ENCODE measurements at regions of chr3 and their contacts with region 1.

Region 1: GRCh38 chr3:120417272-120417911 is 33.4 kb downstream of the FSTL1 start:
- DNase-seq: peak; percentile 94
- ATAC-seq: peak; percentile 90
- H3K4me3 Mint-ChIP-seq: peak overlapping the region; percentile 46
- H3K27ac Mint-ChIP-seq: peak overlapping the region; percentile 87
- H3K4me1 Mint-ChIP-seq: peaks cover 46% of the 10 kb centered on the region
- H3K27me3 Mint-ChIP-seq: no peaks in the 10 kb centered on the region
- CTCF ChIP-seq: peak; percentile 77

Region 2: DNA sequence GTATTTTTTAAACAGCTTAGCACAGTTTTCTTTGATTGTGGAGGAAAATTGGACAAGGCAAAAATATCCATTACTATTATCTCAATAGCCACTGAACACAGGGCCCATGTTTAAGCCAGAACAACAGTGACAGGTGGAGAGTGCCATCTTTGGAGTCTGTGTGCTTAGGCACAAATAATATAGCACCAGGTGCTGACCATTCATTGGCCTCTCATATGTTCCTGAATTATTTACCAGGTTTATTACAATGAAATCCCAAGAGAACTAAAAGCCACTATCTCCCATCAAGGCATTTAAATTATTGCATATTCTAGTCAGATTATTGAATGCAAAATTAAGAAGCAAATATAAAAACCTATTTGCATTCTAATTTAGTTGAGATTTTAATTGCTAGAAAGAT is 172.0 kb before region 1 on chr3:
- CTCF ChIA-PET with region 1: interaction called, 52 read pairs
- POLR2A ChIA-PET with region 1: no interaction called
- DNase-seq: no peak
- ATAC-seq: no peak
- H3K4me3 Mint-ChIP-seq: no peak overlapping the region
- H3K27ac Mint-ChIP-seq: no peak overlapping the region
- H3K4me1 Mint-ChIP-seq: no peaks in the 10 kb centered on the region
- H3K27me3 Mint-ChIP-seq: peaks cover 4% of the 10 kb centered on the region; the same call in 1 of the 2 replicates
- CTCF ChIP-seq: no peak

Region 3: GRCh38 chr3:120432150-120432860 is 14.9 kb after region 1 on chr3:
- CTCF ChIA-PET with region 1: interaction called, 40 read pairs
- POLR2A ChIA-PET with region 1: interaction called, 9 read pairs
- DNase-seq: peak; percentile 64
- ATAC-seq: peak; percentile 81
- H3K4me3 Mint-ChIP-seq: no peak overlapping the region
- H3K27ac Mint-ChIP-seq: peak overlapping the region; percentile 95
- H3K4me1 Mint-ChIP-seq: peaks cover 74% of the 10 kb centered on the region
- H3K27me3 Mint-ChIP-seq: no peaks in the 10 kb centered on the region
- CTCF ChIP-seq: no peak

Region 4: GRCh38 chr3:120450600-120451271 is 33.3 kb after region 1 on chr3 and contains the start of gene FSTL1:
- CTCF ChIA-PET with region 1: interaction called, 39 read pairs
- POLR2A ChIA-PET with region 1: interaction called, 13 read pairs
- DNase-seq: peak; percentile 79
- ATAC-seq: peak; percentile 70
- H3K4me3 Mint-ChIP-seq: peak within 1 kb of the TSS; percentile 90
- H3K27ac Mint-ChIP-seq: peak within 1 kb of the TSS; percentile 73
- H3K4me1 Mint-ChIP-seq: peaks cover 52% of the 10 kb centered on the region
- H3K27me3 Mint-ChIP-seq: no peaks in the 10 kb centered on the region; the same call in 1 of the 2 replicates
- CTCF ChIP-seq: no peak
- total RNA-seq, gene FSTL1: 271 to 286 TPM (median 272 TPM) in 3 replicates

Region 5: DNA sequence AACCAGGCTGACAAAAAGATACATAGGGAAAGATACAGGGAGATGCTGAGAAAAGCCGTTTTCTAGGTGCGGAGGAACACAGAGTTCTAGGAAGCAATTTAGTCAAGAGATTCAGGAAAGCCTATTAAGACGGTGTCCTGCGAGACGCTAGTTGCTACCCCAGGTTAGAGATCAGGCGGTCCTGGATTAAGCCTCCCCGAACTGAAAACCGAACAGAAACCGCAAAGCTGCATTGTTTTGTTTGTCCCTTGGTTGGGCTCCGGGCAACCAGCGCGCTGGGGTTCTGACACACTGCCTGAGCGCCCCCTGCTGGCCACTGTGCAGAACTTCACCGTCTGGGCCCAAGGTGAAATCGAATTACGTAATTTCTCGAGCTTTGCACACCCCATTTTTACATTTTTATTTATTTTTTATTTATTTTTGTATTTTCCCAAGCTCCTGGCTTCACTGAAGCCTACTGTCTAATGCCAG is 141.4 kb after region 1 on chr3:
- CTCF ChIA-PET with region 1: interaction called, 161 read pairs
- POLR2A ChIA-PET with region 1: interaction called, 16 read pairs
- DNase-seq: peak; percentile 90
- ATAC-seq: peak; percentile 66
- H3K4me3 Mint-ChIP-seq: peak overlapping the region; percentile 95
- H3K27ac Mint-ChIP-seq: no peak overlapping the region
- H3K4me1 Mint-ChIP-seq: peaks cover 26% of the 10 kb centered on the region
- H3K27me3 Mint-ChIP-seq: peaks cover 12% of the 10 kb centered on the region
- CTCF ChIP-seq: peak; percentile 98

Region 6: GRCh38 chr3:120705851-120706582 is 288.6 kb after region 1 on chr3:
- CTCF ChIA-PET with region 1: no interaction called
- POLR2A ChIA-PET with region 1: no interaction called
- DNase-seq: no peak
- ATAC-seq: no peak
- H3K4me3 Mint-ChIP-seq: no peak overlapping the region
- H3K27ac Mint-ChIP-seq: 0 out of 2 replicates have a peak overlapping the region, but pooled peaks have one; percentile 13
- H3K4me1 Mint-ChIP-seq: peaks cover 3% of the 10 kb centered on the region; the same call in 1 of the 2 replicates
- H3K27me3 Mint-ChIP-seq: no peaks in the 10 kb centered on the region
- CTCF ChIP-seq: no peak

Region 7: DNA sequence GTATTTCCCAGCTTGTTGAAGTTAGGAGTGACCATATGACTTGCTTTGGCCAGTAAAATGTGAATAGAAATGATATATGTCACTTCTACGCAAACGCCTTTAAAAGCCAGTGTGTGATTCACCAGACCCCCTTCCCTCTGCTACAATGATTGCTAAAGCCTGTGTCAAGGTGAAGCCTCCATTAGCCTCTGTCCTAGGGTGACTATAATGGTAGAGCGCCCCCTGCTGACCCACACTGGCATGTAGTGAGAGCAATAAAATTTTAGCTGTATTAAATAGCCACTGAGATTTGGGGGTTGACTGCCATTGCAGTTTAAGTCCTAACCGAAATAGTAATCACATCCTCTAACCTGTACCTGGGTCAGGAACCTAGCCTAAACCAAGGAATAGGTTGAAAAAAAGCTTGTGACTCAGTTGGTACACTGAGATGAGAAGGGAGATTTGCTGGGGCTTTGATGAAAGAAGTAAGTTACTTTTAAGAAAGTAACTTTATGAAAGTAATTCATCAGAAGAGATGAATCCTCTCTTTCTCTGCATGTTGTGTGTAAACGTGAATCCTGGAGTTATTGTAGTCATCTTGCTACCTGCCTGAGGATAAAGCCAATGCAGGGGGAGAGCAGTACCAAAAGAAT is 377.7 kb after region 1 on chr3:
- CTCF ChIA-PET with region 1: interaction called, 15 read pairs
- POLR2A ChIA-PET with region 1: no interaction called
- DNase-seq: peak; percentile 91
- ATAC-seq: peak; percentile 93
- H3K4me3 Mint-ChIP-seq: no peak overlapping the region
- H3K27ac Mint-ChIP-seq: no peak overlapping the region
- H3K4me1 Mint-ChIP-seq: peaks cover 57% of the 10 kb centered on the region
- H3K27me3 Mint-ChIP-seq: no peaks in the 10 kb centered on the region
- CTCF ChIP-seq: peak; percentile 83

Measured in WTC11 (cell line).